Ascending aorta (tissue), 2 donors: ENCODE measurements at regions of chr6 and their contacts with region 1.

Region 1: DNA sequence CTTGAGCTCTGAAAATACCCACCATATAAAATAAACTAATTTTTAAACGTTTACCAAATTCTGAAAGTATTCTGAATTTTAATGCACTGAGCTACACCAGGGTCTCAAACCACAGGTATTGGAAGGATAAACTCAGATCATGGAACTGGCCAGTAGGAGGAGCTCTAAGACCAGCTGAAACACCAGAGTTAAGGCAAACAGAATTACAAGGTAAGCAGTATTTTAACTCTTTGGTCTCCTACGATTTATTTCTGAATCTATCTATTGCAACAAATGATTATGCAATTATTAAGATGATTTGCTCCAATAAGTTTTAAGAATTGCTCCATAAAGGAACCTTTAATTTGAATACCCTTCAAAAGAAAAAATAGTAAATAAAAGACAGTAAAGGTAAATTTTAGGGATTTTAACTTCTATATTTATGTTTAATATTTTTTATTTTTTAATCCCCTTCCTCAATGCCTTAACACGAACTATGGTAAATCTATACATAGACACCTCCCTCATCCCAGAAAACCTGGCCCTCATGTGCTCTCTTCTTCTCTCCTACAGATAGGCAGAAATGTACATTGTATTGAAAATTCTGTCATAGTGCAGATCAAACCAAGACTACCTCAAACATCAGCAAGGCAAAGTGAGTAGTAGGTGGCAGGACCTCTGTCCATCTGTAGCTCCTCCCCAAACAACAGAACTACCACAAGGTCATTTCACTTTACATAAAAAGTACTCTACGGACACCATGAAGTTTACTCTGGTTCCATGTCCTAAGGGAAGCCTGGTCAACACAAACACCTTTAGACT is 58.4 kb downstream of the SMLR1 start:
- DNase-seq: peak in 1 of 2 donors; percentile 82
- H3K4me3 ChIP-seq: no peak overlapping the region
- H3K27ac ChIP-seq: no peak overlapping the region
- H3K4me1 ChIP-seq: no peaks in the 10 kb centered on the region
- H3K27me3 ChIP-seq: no peaks in the 10 kb centered on the region
- CTCF ChIP-seq: peak; percentile 75 to 88 (median 75)

Region 2: DNA sequence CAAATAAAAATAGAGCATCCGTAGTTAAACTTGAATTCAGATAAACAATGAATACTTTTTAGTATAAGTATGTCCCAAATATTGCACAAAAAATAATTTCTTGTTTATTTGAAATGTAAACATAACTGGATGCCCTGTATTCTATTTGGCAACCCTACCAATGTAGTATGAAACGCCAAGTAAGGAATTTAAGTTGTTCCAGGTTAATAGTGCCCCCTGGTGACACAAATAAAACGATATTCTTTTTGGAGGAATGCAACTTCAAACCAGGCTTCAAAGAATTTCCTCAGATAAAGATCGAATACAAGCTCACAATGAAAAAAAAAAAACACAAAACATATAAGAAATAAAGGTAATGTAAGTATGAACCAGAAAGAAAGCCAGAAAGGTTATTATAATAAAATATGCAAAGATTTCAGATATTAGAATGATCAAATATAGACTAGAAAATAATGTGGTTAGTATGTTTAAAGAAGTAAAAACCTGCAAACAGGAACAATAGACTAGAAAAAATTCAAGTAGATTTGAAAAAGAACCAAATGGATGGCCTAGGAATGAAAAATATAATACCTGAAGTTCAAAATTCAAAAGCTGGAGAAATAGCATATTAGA is 231.3 kb after region 1 on chr6:
- intact Hi-C with region 1: loop called (anchors 1 kb)
- DNase-seq: no peak
- H3K4me3 ChIP-seq: no peak overlapping the region
- H3K27ac ChIP-seq: no peak overlapping the region
- H3K4me1 ChIP-seq: no peaks in the 10 kb centered on the region
- H3K27me3 ChIP-seq: no peaks in the 10 kb centered on the region
- CTCF ChIP-seq: peak; percentile 41 to 59 (median 45)